GM12878 (cell line): ENCODE measurements at regions of chr11 and their contacts with region 1.

Region 1: GRCh38 chr11:130131961-130132850 is 27.4 kb upstream of the ST14 start:
- DNase-seq: peak; percentile 15
- ATAC-seq: peak; percentile 94
- H3K4me3 ChIP-seq: no peak overlapping the region
- H3K27ac ChIP-seq: no peak overlapping the region
- H3K4me1 ChIP-seq: no peaks in the 10 kb centered on the region
- H3K27me3 ChIP-seq: no peaks in the 10 kb centered on the region
- CTCF ChIP-seq: peak; percentile 72 to 90 (median 89)
- EP300 ChIP-seq: no peak
- POLR2A ChIP-seq: no peak
- RAD21 ChIP-seq: peak; percentile 98

Region 2: GRCh38 chr11:129766898-129767604 is 365.2 kb before region 1 on chr11:
- CTCF ChIA-PET with region 1: interaction called, 16 read pairs
- POLR2A ChIA-PET with region 1: no interaction called
- RAD21 ChIA-PET with region 1: interaction called, 6 read pairs
- SMC1A ChIA-PET with region 1: no interaction called
- in situ Hi-C with region 1: no loop called
- intact Hi-C with region 1: loop called (anchors 1 kb)
- DNase-seq: no peak
- ATAC-seq: peak; percentile 80
- H3K4me3 ChIP-seq: no peak overlapping the region
- H3K27ac ChIP-seq: no peak overlapping the region
- H3K4me1 ChIP-seq: no peaks in the 10 kb centered on the region
- H3K27me3 ChIP-seq: no peaks in the 10 kb centered on the region
- CTCF ChIP-seq: peak; percentile 36 to 57 (median 39); a peak in 5 of 6 replicates
- EP300 ChIP-seq: no peak
- POLR2A ChIP-seq: no peak
- RAD21 ChIP-seq: no peak

Region 3: GRCh38 chr11:129911298-129911697 is 220.9 kb before region 1 on chr11:
- CTCF ChIA-PET with region 1: interaction called, 17 read pairs
- POLR2A ChIA-PET with region 1: no interaction called
- RAD21 ChIA-PET with region 1: interaction called, 3 read pairs
- SMC1A ChIA-PET with region 1: interaction called, 8 read pairs
- in situ Hi-C with region 1: no loop called
- intact Hi-C with region 1: no loop called
- DNase-seq: no peak
- ATAC-seq: no peak
- H3K4me3 ChIP-seq: no peak overlapping the region
- H3K27ac ChIP-seq: no peak overlapping the region
- H3K4me1 ChIP-seq: no peaks in the 10 kb centered on the region
- H3K27me3 ChIP-seq: no peaks in the 10 kb centered on the region
- CTCF ChIP-seq: no peak
- EP300 ChIP-seq: no peak
- POLR2A ChIP-seq: no peak
- RAD21 ChIP-seq: no peak

Region 4: GRCh38 chr11:129930296-129930695 is 201.9 kb before region 1 on chr11:
- CTCF ChIA-PET with region 1: interaction called, 400 read pairs
- POLR2A ChIA-PET with region 1: interaction called, 3 read pairs
- RAD21 ChIA-PET with region 1: interaction called, 209 read pairs
- SMC1A ChIA-PET with region 1: interaction called, 87 read pairs
- in situ Hi-C with region 1: no loop called
- intact Hi-C with region 1: no loop called
- DNase-seq: no peak
- ATAC-seq: no peak
- H3K4me3 ChIP-seq: no peak overlapping the region
- H3K27ac ChIP-seq: no peak overlapping the region
- H3K4me1 ChIP-seq: no peaks in the 10 kb centered on the region
- H3K27me3 ChIP-seq: no peaks in the 10 kb centered on the region
- CTCF ChIP-seq: no peak
- EP300 ChIP-seq: no peak
- POLR2A ChIP-seq: no peak
- RAD21 ChIP-seq: no peak

Region 5: DNA sequence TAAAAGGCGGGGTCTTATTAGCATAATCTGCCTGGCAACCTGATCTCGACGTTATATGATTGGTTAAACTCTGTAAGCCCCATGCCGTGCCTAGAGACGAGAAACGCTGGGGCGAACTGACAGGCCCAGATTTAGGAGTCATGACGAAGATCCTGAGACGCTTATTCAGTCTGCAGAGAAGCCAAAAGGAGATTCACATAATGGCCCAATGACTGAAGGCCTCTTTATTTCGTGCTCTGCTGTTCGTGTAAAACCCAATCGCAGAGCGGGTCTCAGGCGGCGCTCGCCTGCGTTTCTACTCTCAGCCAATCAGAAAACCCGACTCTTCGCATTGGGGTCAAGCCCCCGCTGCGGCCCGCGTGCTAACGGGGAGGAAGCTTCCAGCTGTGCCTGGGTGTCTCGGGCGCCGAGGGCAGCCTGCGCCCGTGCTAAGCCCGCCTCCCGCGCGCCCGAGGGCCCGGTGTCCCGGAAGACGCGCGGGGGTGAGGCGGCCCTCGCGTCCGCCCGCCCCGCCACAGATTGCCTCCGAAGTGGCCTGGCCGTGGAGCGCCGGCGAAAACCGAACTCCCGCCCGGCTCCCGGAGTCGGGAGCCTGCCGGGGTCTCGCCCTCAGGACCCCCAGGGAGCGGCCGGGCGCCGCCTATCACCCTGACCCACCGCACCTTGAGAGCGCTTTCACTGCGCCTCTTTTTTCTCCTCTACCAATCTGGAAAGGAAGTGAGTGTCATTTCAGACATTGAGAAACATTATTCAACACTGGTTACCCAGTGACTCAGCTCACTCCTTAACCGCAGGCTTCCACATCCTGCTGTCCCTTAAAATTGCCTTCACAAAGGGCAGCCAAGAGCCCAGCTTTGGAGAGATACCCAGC is 129.1 kb before region 1 on chr11:
- CTCF ChIA-PET with region 1: interaction called, 36 read pairs
- POLR2A ChIA-PET with region 1: no interaction called
- RAD21 ChIA-PET with region 1: interaction called, 41 read pairs
- SMC1A ChIA-PET with region 1: interaction called, 23 read pairs
- in situ Hi-C with region 1: no loop called
- intact Hi-C with region 1: no loop called
- DNase-seq: peak; percentile 95
- ATAC-seq: peak; percentile 85
- H3K4me3 ChIP-seq: peak overlapping the region; percentile 84
- H3K27ac ChIP-seq: peak overlapping the region; percentile 100
- H3K4me1 ChIP-seq: 0 out of 2 replicates have a peak, but pooled peaks cover 6% of the 10 kb centered on the region
- H3K27me3 ChIP-seq: no peaks in the 10 kb centered on the region
- CTCF ChIP-seq: no peak
- EP300 ChIP-seq: peak; percentile 35 to 36; a peak in 2 of 4 replicates
- POLR2A ChIP-seq: peak; percentile 90
- RAD21 ChIP-seq: no peak

Region 6: DNA sequence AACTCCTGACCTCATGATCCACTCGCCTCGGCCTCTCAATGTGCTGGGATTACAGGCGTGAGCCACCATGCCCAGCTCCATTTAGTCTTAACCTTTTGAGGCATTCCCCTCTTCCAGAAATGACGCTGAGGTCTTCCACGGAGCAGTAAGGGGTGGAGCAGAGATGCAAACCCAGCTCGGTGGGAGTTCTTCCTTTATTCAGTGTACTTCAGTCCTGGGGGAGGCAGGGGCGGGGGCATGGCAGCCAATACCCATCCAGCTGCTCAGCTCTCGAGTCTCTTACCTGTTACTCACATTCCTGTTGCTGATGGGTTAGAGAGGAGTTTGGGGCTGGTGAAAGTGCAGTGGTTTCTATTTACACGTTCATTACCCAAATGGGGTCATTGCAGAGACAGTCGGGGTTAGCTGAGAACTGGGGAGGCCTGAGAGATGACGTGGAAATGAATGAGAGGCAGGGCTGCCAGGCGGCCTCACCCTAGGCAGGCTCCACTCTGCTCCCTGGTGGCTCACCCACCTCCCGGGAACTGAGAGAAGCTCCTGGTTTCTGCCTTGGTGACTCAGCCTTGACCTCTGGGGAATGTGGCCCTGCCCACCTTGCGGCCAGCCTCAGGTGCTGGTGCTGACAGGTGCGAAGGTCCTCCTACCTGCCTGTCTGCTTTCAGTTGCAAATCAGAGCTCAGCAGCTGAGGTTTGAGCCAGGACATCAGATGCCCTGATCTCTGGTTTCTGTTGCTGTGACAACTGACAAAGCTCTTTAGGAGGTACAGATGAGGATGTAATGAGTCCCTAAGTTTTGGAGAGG is 14.0 kb after region 1 on chr11:
- CTCF ChIA-PET with region 1: interaction called, 45 read pairs
- POLR2A ChIA-PET with region 1: interaction called, 3 read pairs
- RAD21 ChIA-PET with region 1: interaction called, 30 read pairs
- SMC1A ChIA-PET with region 1: interaction called, 33 read pairs
- in situ Hi-C with region 1: no loop called
- intact Hi-C with region 1: no loop called
- DNase-seq: no peak
- ATAC-seq: peak; percentile 67
- H3K4me3 ChIP-seq: no peak overlapping the region
- H3K27ac ChIP-seq: no peak overlapping the region
- H3K4me1 ChIP-seq: peaks cover 42% of the 10 kb centered on the region
- H3K27me3 ChIP-seq: no peaks in the 10 kb centered on the region
- CTCF ChIP-seq: peak in 1 of 3 experiments; percentile 17; a peak in 1 of 6 replicates
- EP300 ChIP-seq: no peak
- POLR2A ChIP-seq: no peak
- RAD21 ChIP-seq: no peak